ENCODE measurements at regions of chr16 and their contacts with region 1.

Region 1: GRCh38 chr16:71894921-71895678 is at the start of gene IST1:
- DNase-seq: peak; percentile 97 to 98 (median 98)
- H3K4me3 ChIP-seq: peak within 1 kb of the TSS; percentile 68 to 98 (median 78)
- H3K4me3 Mint-ChIP-seq: peak within 1 kb of the TSS; percentile 98 to 99
- H3K27ac ChIP-seq: peak within 1 kb of the TSS; percentile 91 to 93
- H3K27ac Mint-ChIP-seq: peak within 1 kb of the TSS; percentile 96 to 99 (median 99)
- H3K4me1 ChIP-seq: peaks cover 29 to 50% of the 10 kb centered on the region in 2 donors
- H3K4me1 Mint-ChIP-seq: peaks cover 39% of the 10 kb centered on the region
- H3K27me3 ChIP-seq: no peaks in the 10 kb centered on the region
- H3K27me3 Mint-ChIP-seq: peaks cover 0 to 1% (median 0%) of the 10 kb centered on the region in 3 donors
- CTCF ChIP-seq: no peak
- polyA plus RNA-seq, gene IST1: 81.3 to 233 (median 102) TPM

Region 2: GRCh38 chr16:71830359-71830758 is 64.7 kb before region 1 on chr16:
- intact Hi-C with region 1: no loop called
- DNase-seq: no peak
- H3K4me3 ChIP-seq: no peak overlapping the region
- H3K4me3 Mint-ChIP-seq: no peak overlapping the region
- H3K27ac ChIP-seq: no peak overlapping the region
- H3K27ac Mint-ChIP-seq: no peak overlapping the region
- H3K4me1 ChIP-seq: no peaks in the 10 kb centered on the region
- H3K4me1 Mint-ChIP-seq: peaks cover 2% of the 10 kb centered on the region
- H3K27me3 ChIP-seq: no peaks in the 10 kb centered on the region
- H3K27me3 Mint-ChIP-seq: peaks cover 0 to 2% (median 0%) of the 10 kb centered on the region in 3 donors
- CTCF ChIP-seq: no peak

Region 3: DNA sequence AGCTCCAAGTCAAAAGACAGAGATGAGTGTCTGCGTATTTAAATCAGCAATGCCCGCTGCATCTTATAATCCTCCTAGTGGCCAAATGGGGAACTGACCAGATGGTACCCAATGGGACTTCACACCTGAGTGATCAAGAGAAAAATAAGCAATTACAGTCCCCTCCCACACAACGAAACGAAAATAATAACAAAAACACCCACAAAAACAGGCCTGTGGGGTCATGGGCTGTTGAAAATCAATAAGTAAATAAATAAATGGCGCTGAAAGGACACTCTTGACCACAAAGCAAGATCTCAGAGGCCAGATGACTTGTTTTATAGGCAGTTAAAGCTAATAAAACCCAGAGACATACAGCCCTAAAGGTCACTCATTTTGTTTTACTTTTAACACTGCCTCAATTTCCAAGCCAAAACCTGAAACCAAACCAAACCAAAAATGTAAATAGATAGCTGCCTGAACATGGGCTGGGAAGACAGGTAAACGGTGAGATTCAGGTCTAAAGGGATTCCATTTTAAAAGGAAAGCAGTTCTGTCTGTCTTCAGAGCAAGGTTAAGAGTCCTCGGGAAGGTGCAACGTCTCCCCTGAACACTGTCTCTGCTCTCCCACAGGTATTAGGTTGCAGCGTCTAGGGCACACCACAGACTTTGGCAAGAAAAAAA is 12.5 kb before region 1 on chr16:
- intact Hi-C with region 1: no loop called
- DNase-seq: peak; percentile 62 to 80 (median 71)
- H3K4me3 ChIP-seq: peak overlapping the region in 1 of 3 experiments; percentile 85
- H3K4me3 Mint-ChIP-seq: peak overlapping the region; percentile 84 to 85
- H3K27ac ChIP-seq: no peak overlapping the region
- H3K27ac Mint-ChIP-seq: peak overlapping the region in 2 of 7 donors; percentile 15 to 71
- H3K4me1 ChIP-seq: peaks cover 42 to 45% of the 10 kb centered on the region in 2 donors
- H3K4me1 Mint-ChIP-seq: peaks cover 47% of the 10 kb centered on the region
- H3K27me3 ChIP-seq: no peaks in the 10 kb centered on the region
- H3K27me3 Mint-ChIP-seq: peaks cover 2 to 11% (median 7%) of the 10 kb centered on the region in 3 donors
- CTCF ChIP-seq: peak; percentile 93

Region 4: DNA sequence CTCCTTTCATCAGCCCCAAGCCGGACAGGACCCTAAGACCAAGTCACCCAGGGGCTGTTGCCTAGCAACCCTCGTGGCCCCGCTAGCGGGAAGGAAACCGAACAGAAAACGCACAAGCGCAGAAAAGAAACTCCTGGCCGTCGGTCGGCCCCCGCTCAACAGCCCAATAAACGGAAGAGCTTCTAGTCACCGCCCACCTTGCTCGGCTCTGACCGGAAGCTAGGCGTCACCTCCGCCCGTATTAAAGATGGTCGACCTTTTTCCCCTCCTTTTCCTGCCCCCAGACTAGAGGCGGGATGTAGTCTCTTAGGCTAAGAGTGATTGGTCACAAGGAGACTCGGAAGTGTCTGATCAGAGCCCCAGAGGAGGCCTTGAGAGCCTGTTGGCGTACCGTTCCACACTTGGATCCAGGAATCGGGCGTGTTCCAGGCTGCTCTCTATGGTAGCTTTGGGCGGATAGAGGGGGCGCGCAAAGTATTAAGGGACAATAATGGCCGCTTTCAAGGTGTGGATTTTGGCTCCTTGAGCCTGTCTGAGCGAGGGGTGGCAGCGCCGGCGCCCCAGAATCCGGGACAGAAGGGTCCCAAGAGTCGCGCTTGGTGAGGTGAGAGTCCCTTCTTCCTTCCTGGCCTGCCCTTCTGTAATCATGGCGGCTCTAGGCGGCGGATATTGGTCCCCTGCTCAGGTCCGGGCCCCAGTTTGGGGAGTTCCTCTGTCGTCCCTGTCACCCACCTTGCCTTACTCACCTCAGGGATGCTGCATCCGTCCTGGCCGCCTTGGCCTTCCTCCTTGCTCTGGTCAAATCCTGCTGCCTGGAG is 198.6 kb after region 1 on chr16 and contains the starts of genes DHX38 and TXNL4B:
- intact Hi-C with region 1: loop called in 1 of 2 experiments (anchors 10 kb)
- DNase-seq: peak; percentile 96 to 98 (median 96)
- H3K4me3 ChIP-seq: peak within 1 kb of the TSS; percentile 75 to 100 (median 80)
- H3K4me3 Mint-ChIP-seq: peak within 1 kb of the TSS; percentile 93 to 97
- H3K27ac ChIP-seq: peak within 1 kb of the TSS; percentile 83 to 93
- H3K27ac Mint-ChIP-seq: peak within 1 kb of the TSS; percentile 91 to 98 (median 96)
- H3K4me1 ChIP-seq: peaks cover 22 to 39% of the 10 kb centered on the region in 2 donors
- H3K4me1 Mint-ChIP-seq: peaks cover 35% of the 10 kb centered on the region
- H3K27me3 ChIP-seq: no peaks in the 10 kb centered on the region
- H3K27me3 Mint-ChIP-seq: no peaks in the 10 kb centered on the region
- CTCF ChIP-seq: no peak
- polyA plus RNA-seq, gene DHX38: 9.1 to 91.5 (median 19.2) TPM
- polyA plus RNA-seq, gene TXNL4B: 6.4 to 10.9 (median 7.0) TPM